ENCODE measurements at regions of chr2 and their contacts with region 1.

Region 1: DNA sequence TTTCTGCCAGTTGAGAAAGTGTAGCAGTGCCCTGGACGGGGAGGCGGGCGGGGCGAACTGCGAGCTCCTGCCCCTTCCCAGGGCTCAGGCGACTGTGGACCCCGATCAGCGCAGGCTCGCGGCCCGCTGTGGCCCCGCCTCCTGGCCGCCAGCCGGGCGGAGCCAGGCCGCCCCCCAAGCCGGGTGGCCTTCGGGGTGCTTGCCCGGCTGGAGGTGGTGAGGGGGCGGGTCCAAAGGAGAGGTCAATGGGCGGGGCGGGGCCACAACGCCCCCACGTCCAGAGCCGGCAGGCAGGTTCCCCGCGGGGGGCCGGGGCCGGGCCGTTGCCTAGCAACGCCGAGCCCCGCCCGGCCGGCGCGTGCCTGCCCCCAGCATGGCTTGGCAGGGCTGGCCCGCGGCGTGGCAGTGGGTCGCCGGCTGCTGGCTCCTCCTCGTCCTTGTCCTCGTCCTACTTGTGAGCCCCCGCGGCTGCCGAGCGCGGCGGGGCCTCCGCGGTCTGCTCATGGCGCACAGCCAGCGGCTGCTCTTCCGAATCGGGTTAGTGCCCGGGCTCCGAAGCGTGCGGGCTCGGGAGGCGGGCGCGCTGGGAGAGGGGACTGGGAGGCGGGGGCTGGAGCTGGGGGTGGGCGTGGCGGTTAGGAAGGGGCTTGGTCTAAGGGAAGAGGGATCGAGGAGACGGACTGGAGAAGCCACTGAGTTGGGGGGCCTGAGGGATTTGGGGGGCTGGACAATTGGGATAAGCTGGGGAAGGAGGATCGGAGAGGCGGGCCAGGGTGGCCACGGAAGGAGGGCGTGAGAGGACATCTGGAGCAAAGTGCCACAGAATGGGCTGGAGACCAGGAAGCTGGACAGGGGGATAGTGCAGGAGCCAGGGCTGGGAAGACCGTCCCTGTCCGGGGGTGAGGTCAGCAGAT is 30.8 kb upstream of the TMBIM1 start:
- DNase-seq: peak; percentile 89
- H3K4me3 Mint-ChIP-seq: peak overlapping the region; percentile 97
- H3K27ac Mint-ChIP-seq: peak overlapping the region; percentile 95
- H3K4me1 Mint-ChIP-seq: peaks cover 39% of the 10 kb centered on the region
- H3K27me3 Mint-ChIP-seq: no peaks in the 10 kb centered on the region
- CTCF ChIP-seq: no peak

Region 2: DNA sequence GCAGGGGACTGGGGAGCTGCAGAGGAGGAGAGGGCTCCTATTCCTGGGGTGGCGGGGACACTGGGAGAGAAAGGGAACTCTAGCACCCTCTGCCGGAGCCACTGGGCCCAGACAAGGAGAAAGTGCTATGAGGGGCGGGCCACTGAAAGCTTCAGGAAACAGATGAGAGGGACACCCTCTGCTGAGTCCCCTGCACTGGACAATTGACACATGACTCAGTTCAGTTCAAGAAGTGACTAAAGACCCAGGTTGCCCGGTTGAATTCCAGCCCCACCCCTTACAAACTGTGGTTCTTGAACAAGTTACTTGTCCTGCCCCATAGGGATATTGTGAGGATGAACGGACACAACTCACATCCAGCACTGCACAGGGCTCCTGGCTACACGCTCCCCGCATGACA is 249.1 kb before region 1 on chr2:
- CTCF ChIA-PET with region 1: no interaction called
- intact Hi-C with region 1: no loop called
- DNase-seq: peak; percentile 65
- H3K4me3 Mint-ChIP-seq: no peak overlapping the region
- H3K27ac Mint-ChIP-seq: no peak overlapping the region
- H3K4me1 Mint-ChIP-seq: no peaks in the 10 kb centered on the region
- H3K27me3 Mint-ChIP-seq: peaks cover 87% of the 10 kb centered on the region
- CTCF ChIP-seq: peak; percentile 36

Region 3: GRCh38 chr2:218312267-218312756 is 10.8 kb before region 1 on chr2:
- CTCF ChIA-PET with region 1: interaction called, 15 read pairs
- intact Hi-C with region 1: no loop called
- DNase-seq: peak; percentile 66
- H3K4me3 Mint-ChIP-seq: peak overlapping the region; percentile 18
- H3K27ac Mint-ChIP-seq: peak overlapping the region; percentile 85
- H3K4me1 Mint-ChIP-seq: peaks cover 41% of the 10 kb centered on the region
- H3K27me3 Mint-ChIP-seq: no peaks in the 10 kb centered on the region
- CTCF ChIP-seq: no peak

Region 4: GRCh38 chr2:218360447-218360846 is 37.3 kb after region 1 on chr2:
- CTCF ChIA-PET with region 1: interaction called, 6 read pairs
- intact Hi-C with region 1: loop called (anchors 5 kb)
- DNase-seq: no peak
- H3K4me3 Mint-ChIP-seq: no peak overlapping the region
- H3K27ac Mint-ChIP-seq: no peak overlapping the region
- H3K4me1 Mint-ChIP-seq: peaks cover 10% of the 10 kb centered on the region
- H3K27me3 Mint-ChIP-seq: no peaks in the 10 kb centered on the region
- CTCF ChIP-seq: no peak

Region 5: GRCh38 chr2:218452079-218452478 is 128.9 kb after region 1 on chr2:
- CTCF ChIA-PET with region 1: no interaction called
- intact Hi-C with region 1: no loop called
- DNase-seq: no peak
- H3K4me3 Mint-ChIP-seq: no peak overlapping the region
- H3K27ac Mint-ChIP-seq: no peak overlapping the region
- H3K4me1 Mint-ChIP-seq: peaks cover 24% of the 10 kb centered on the region
- H3K27me3 Mint-ChIP-seq: no peaks in the 10 kb centered on the region
- CTCF ChIP-seq: no peak

Measured in Calu3 (cell line).